HepG2 (cell line): ENCODE measurements at regions of chr4 and their contacts with region 1.

Region 1: GRCh38 chr4:159655547-159655946 is 552.7 kb downstream of the RAPGEF2 start:
- DNase-seq: no peak
- ATAC-seq: no peak
- H3K4me3 ChIP-seq: no peak overlapping the region
- H3K27ac ChIP-seq: no peak overlapping the region
- H3K4me1 ChIP-seq: no peaks in the 10 kb centered on the region
- H3K27me3 ChIP-seq: no peaks in the 10 kb centered on the region
- CTCF ChIP-seq: no peak
- EP300 ChIP-seq: no peak
- POLR2A ChIP-seq: no peak
- RAD21 ChIP-seq: no peak

Region 2: DNA sequence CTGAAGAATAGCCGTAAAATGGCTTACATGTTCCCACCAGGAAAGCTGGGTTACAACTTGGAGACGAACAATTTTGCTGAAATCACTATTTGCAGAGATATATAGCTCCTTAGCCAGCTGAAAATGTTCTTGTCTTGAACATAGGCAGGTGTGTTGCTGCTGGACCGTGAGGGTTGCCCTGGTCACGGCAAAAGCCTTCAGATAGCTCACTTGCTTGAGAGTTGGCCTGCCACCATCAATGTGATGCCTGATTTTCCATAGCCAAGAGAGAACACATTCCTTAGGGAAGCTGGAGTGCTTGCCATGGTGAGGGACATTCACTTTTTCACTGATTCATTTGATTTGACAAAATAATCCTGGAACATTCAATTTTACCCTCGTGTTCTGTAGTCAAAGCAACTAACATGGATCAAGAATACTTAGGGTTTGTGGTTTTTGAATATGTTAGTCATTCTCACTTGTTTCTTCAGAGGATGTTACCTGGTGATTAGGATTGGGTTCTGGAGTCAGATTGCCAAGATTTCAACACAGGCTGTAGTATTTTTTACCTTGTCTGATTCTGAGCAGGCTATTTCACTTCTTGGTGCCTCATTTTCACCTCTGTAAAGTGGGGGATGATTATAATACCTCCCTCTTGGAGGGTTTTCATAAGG is 15.8 kb before region 1 on chr4:
- CTCF ChIA-PET with region 1: no interaction called
- POLR2A ChIA-PET with region 1: no interaction called
- in situ Hi-C with region 1: no loop called
- intact Hi-C with region 1: loop called (anchors 1 kb)
- DNase-seq: no peak
- ATAC-seq: no peak
- H3K4me3 ChIP-seq: no peak overlapping the region
- H3K27ac ChIP-seq: no peak overlapping the region
- H3K4me1 ChIP-seq: peaks cover 15% of the 10 kb centered on the region
- H3K27me3 ChIP-seq: no peaks in the 10 kb centered on the region
- CTCF ChIP-seq: no peak
- EP300 ChIP-seq: no peak
- POLR2A ChIP-seq: no peak
- RAD21 ChIP-seq: no peak